ENCODE measurements at regions of chr19 and their contacts with region 1.

Region 1: GRCh38 chr19:12681074-12681951 is at the start of gene DHPS:
- DNase-seq: peak; percentile 93
- CTCF ChIP-seq: no peak

Region 2: GRCh38 chr19:12639901-12640613 is 41.3 kb before region 1 on chr19:
- CTCF ChIA-PET with region 1: interaction called, 10 read pairs
- POLR2A ChIA-PET with region 1: no interaction called
- DNase-seq: peak; percentile 91
- CTCF ChIP-seq: peak; percentile 65

Region 3: DNA sequence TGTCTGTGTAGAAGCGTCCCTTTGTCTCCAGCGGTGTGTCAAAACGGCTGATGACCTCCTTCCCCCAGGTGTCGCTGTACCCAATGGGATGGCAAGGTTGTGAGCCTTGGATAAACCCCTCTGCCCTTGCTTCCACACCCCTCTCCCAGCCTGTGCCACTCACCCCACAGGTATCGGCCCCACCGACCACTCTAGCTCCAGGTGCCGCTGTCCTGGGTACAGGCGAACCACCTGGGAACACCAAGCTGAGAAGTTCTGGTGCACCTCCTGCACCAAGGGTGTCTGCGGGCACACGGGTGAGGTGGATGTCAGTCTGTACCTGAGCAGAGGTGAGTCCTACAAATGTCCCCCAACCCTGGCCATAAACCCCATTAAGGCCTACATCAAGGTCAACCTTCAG is 31.4 kb before region 1 on chr19:
- CTCF ChIA-PET with region 1: no interaction called
- POLR2A ChIA-PET with region 1: interaction called, 11 read pairs
- DNase-seq: peak; percentile 11
- CTCF ChIP-seq: no peak

Region 4: GRCh38 chr19:12666265-12667048 is 14.9 kb before region 1 on chr19 and contains the starts of genes MAN2B1 and WDR83:
- CTCF ChIA-PET with region 1: interaction called, 16 read pairs
- POLR2A ChIA-PET with region 1: interaction called, 6 read pairs
- DNase-seq: peak; percentile 94
- CTCF ChIP-seq: no peak

Region 5: GRCh38 chr19:12696366-12697335 is 15.3 kb after region 1 on chr19 and contains the start of gene FBXW9:
- CTCF ChIA-PET with region 1: interaction called, 6 read pairs
- POLR2A ChIA-PET with region 1: interaction called, 17 read pairs
- DNase-seq: peak; percentile 98
- CTCF ChIP-seq: no peak

Region 6: GRCh38 chr19:12722566-12723380 is 41.5 kb after region 1 on chr19:
- CTCF ChIA-PET with region 1: interaction called, 3 read pairs
- POLR2A ChIA-PET with region 1: interaction called, 17 read pairs
- DNase-seq: peak; percentile 97
- CTCF ChIP-seq: no peak